Sigmoid colon (tissue), 7 donors: ENCODE measurements at regions of chr2 and their contacts with region 1.

Region 1: DNA sequence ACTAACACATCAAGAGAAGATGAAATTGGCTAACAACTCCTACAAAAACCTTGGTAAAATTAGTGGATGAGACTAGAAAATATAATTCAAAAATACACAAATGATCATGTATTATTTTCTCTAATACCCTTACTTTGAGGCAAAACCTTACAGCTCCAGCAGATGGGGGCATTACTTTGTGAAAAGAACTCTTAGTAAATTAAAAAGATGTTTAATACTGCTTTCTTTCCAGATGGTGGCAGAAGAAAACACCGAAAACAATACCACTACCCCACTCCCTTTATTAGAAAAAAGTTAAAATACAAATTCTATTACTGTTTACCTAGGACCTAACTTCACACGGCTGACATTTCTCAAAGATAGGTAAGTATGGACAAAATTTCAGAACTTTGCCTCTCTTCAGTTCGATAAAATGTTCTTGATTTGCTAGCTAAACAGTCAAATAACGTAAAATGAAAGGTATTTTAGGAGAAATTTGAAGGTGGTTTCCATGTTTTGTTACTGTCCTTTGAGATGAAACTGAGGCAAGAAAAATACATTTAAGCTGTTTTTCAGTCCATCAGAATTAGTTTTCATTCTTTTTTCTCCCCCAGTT is 30.6 kb downstream of the ORC4 start:
- DNase-seq: no peak
- H3K4me3 ChIP-seq: no peak overlapping the region
- H3K27ac ChIP-seq: no peak overlapping the region
- H3K4me1 ChIP-seq: peaks cover 0 to 5% (median 2%) of the 10 kb centered on the region in 4 donors
- H3K27me3 ChIP-seq: no peaks in the 10 kb centered on the region
- CTCF ChIP-seq: peak; percentile 56 to 75 (median 63)
- EP300 ChIP-seq: no peak
- POLR2A ChIP-seq: no peak

Region 2: DNA sequence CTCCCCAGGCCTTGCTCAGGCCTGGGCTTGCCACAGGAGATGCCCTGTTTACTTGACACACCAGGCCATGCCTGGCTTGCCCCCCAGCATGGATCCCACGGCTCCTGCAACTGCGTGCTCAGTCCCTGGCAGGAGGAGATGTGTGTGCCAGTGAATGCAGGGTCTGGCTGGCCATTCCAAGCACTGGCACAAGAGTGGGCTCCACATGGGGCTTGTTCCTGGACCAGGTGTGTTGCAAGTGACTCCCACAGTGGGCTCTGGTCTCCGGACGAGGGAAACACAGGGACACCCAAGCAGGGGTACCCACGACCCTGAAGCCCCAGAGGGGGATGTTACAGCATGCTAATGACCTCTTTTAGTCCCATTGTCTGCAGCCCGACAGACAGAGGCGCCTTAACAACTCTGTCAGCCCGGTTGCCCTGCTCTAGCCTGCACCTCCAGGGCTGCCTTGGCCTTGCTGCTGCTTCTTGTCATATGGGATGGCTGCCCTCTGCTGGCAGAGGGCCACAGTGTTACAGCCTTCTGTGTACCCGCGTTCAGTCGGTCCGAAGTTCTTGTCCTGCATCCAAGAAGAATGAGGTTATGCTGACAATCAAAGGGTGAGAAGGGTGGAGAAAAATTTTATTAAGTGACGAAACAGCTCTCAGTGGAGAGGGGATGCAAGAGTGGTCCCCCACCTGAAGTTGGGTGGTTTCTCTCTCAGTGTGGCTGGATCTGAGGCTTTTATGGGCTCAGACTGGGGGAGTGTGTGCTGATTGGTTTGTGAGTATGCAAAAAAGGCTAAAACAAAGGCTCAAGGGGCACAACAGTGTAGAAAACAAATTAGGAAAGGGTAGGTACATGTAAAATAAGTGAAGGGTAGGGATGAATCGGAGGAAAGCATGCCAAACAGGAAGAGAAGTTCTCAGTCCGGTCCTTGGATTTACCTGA is 211.4 kb after region 1 on chr2:
- intact Hi-C with region 1: loop called (anchors 5 kb)
- DNase-seq: peak; percentile 87
- H3K4me3 ChIP-seq: no peak overlapping the region
- H3K27ac ChIP-seq: no peak overlapping the region
- H3K4me1 ChIP-seq: no peaks in the 10 kb centered on the region
- H3K27me3 ChIP-seq: no peaks in the 10 kb centered on the region
- CTCF ChIP-seq: peak in 2 of 4 experiments; percentile 55 to 62
- EP300 ChIP-seq: no peak
- POLR2A ChIP-seq: no peak

Region 3: GRCh38 chr2:148292431-148292830 is 302.5 kb after region 1 on chr2:
- intact Hi-C with region 1: no loop called
- DNase-seq: no peak
- H3K4me3 ChIP-seq: no peak overlapping the region
- H3K27ac ChIP-seq: no peak overlapping the region
- H3K4me1 ChIP-seq: no peaks in the 10 kb centered on the region
- H3K27me3 ChIP-seq: no peaks in the 10 kb centered on the region
- CTCF ChIP-seq: no peak
- EP300 ChIP-seq: no peak
- POLR2A ChIP-seq: no peak

Region 4: DNA sequence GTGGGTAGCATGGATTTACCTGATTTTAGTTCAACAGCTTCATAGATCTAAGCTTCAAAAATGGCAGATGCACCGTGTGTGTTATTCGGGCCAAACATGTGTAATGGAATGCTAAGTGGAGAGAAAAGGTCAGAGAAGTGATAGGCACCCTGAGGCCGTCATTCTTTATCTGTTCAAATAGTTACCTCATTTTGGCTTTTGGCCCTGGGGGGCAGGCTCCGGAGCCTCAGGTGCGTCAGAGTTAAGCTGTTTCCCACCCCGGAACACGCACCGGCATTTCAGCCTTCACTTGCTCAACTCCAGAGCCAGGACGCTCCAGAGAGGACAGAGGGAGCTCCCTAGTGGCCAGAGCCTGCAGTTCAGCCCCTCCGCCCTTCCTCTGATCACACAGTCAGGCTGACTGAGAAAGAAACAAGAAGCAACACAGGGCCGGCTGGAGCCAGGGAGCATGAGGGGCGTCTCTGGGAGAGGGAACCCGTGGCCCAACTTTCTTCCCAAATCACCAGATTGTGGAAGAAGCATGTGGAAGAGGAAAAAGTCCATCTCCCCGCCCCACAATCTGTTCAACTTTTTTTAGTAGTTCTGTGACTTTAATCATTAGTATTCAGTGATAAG is 519.5 kb after region 1 on chr2:
- intact Hi-C with region 1: loop called (anchors 2 kb)
- DNase-seq: peak; percentile 86
- H3K4me3 ChIP-seq: peak overlapping the region; percentile 1 to 26 (median 22)
- H3K27ac ChIP-seq: no peak overlapping the region
- H3K4me1 ChIP-seq: peaks cover 0 to 7% (median 5%) of the 10 kb centered on the region in 4 donors
- H3K27me3 ChIP-seq: no peaks in the 10 kb centered on the region
- CTCF ChIP-seq: peak in 3 of 4 experiments; percentile 70 to 83 (median 73)
- EP300 ChIP-seq: no peak
- POLR2A ChIP-seq: no peak